ENCODE measurements at regions of chr1 and their contacts with region 1.

Region 1: GRCh38 chr1:11735854-11736745 is at the start of gene AGTRAP:
- DNase-seq: peak; percentile 87
- ATAC-seq: peak; percentile 81
- H3K4me3 ChIP-seq: peak within 1 kb of the TSS; percentile 80
- H3K27ac ChIP-seq: peak within 1 kb of the TSS; percentile 66
- H3K4me1 ChIP-seq: peaks cover 9% of the 10 kb centered on the region
- H3K27me3 ChIP-seq: no peaks in the 10 kb centered on the region
- CTCF ChIP-seq: no peak
- POLR2A ChIP-seq: no peak
- RAD21 ChIP-seq: no peak
- total RNA-seq, gene AGTRAP: 21.5 and 22.2 TPM in 2 replicates

Region 2: GRCh38 chr1:11272832-11273594 is 463.1 kb before region 1 on chr1 and contains the start of gene UBIAD1:
- CTCF ChIA-PET with region 1: no interaction called
- POLR2A ChIA-PET with region 1: no interaction called
- dilution Hi-C with region 1: no loop called
- in situ Hi-C with region 1: no loop called
- intact Hi-C with region 1: loop called (anchors 10 kb)
- DNase-seq: peak; percentile 82
- ATAC-seq: peak; percentile 93
- H3K4me3 ChIP-seq: peak within 1 kb of the TSS; percentile 89
- H3K27ac ChIP-seq: peak within 1 kb of the TSS; percentile 91
- H3K4me1 ChIP-seq: peaks cover 7% of the 10 kb centered on the region; the same call in 1 of the 2 replicates
- H3K27me3 ChIP-seq: no peaks in the 10 kb centered on the region
- CTCF ChIP-seq: peak; percentile 24; the same call in 1 of the 2 replicates
- POLR2A ChIP-seq: peak; percentile 84
- RAD21 ChIP-seq: no peak
- total RNA-seq, gene UBIAD1: 4.7 and 6.3 TPM in 2 replicates

Region 3: GRCh38 chr1:11373895-11374747 is 362.0 kb before region 1 on chr1:
- CTCF ChIA-PET with region 1: no interaction called
- POLR2A ChIA-PET with region 1: no interaction called
- dilution Hi-C with region 1: no loop called
- in situ Hi-C with region 1: no loop called
- intact Hi-C with region 1: no loop called
- DNase-seq: no peak
- ATAC-seq: no peak
- H3K4me3 ChIP-seq: no peak overlapping the region
- H3K27ac ChIP-seq: no peak overlapping the region
- H3K4me1 ChIP-seq: no peaks in the 10 kb centered on the region
- H3K27me3 ChIP-seq: peaks cover 3% of the 10 kb centered on the region; the same call in 1 of the 2 replicates
- CTCF ChIP-seq: no peak
- POLR2A ChIP-seq: no peak
- RAD21 ChIP-seq: no peak

Region 4: GRCh38 chr1:11802973-11803885 is 67.1 kb after region 1 on chr1:
- CTCF ChIA-PET with region 1: no interaction called
- POLR2A ChIA-PET with region 1: interaction called, 3 read pairs
- dilution Hi-C with region 1: no loop called
- in situ Hi-C with region 1: no loop called
- intact Hi-C with region 1: loop called (anchors 2 kb)
- DNase-seq: peak; percentile 97
- ATAC-seq: peak; percentile 69
- H3K4me3 ChIP-seq: peak overlapping the region; percentile 53
- H3K27ac ChIP-seq: peak overlapping the region; percentile 70
- H3K4me1 ChIP-seq: peaks cover 13% of the 10 kb centered on the region
- H3K27me3 ChIP-seq: no peaks in the 10 kb centered on the region
- CTCF ChIP-seq: no peak
- POLR2A ChIP-seq: peak; percentile 68
- RAD21 ChIP-seq: no peak; the same call in 1 of the 2 replicates

Region 5: DNA sequence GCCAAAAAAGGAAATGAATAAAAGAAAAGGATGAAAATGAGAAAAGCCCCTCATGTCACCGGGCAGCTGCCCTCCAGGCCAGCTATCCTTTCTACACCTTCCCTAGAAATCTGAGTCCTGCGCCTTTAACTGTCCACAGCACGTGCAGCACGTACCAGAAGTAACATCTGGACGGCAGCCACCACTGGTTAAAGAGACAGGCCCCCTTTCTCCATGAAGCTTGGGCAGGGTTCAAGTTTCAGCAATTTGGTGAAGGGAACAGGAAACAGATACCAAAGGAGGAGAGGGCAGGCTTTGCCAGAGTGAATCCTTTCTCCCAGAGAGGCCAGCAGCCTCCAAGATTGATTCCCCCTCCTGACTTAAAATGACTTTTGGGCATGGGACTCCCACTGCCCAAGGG is 193.7 kb after region 1 on chr1:
- CTCF ChIA-PET with region 1: no interaction called
- POLR2A ChIA-PET with region 1: no interaction called
- dilution Hi-C with region 1: no loop called
- in situ Hi-C with region 1: no loop called
- intact Hi-C with region 1: no loop called
- DNase-seq: peak; percentile 71
- ATAC-seq: no peak
- H3K4me3 ChIP-seq: no peak overlapping the region
- H3K27ac ChIP-seq: peak overlapping the region; percentile 58
- H3K4me1 ChIP-seq: peaks cover 22% of the 10 kb centered on the region
- H3K27me3 ChIP-seq: no peaks in the 10 kb centered on the region
- CTCF ChIP-seq: no peak
- POLR2A ChIP-seq: no peak
- RAD21 ChIP-seq: no peak

Region 6: DNA sequence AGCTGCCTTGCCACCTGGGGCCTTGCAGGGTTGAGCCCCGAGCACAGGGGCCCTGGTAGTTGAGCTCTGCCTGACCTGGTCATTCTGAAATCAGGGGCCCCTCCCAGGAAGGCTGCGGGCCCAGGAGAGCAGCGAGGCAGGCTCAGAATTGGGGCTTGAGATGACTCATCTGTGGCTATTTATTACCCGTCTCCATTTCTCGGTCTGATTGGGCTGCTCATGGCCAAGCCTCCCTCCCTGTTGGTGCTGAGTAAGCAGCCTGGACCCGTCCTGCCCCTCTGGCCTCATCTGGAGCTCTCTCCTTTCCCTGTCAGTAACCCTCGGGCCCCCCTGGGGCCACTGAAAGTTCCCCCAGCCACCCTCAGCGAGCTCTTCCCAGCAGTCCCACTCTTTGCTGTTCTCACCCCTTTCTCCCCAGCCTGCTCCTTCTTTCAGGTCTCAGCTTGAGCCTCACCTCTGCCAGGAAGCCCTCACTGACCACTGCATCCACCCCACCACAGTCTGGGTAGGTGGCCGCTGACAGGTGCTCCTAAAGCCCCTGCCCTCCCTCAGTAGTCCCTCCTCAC is 316.0 kb after region 1 on chr1:
- CTCF ChIA-PET with region 1: no interaction called
- POLR2A ChIA-PET with region 1: no interaction called
- dilution Hi-C with region 1: no loop called
- in situ Hi-C with region 1: no loop called
- intact Hi-C with region 1: no loop called
- DNase-seq: peak; percentile 83
- ATAC-seq: peak; percentile 99
- H3K4me3 ChIP-seq: no peak overlapping the region
- H3K27ac ChIP-seq: no peak overlapping the region
- H3K4me1 ChIP-seq: peaks cover 5% of the 10 kb centered on the region; the same call in 1 of the 2 replicates
- H3K27me3 ChIP-seq: peaks cover 12% of the 10 kb centered on the region
- CTCF ChIP-seq: no peak
- POLR2A ChIP-seq: no peak
- RAD21 ChIP-seq: no peak

Measured in IMR-90 (cell line).